ENCODE measurements at regions of chr14 and their contacts with region 1.

Region 1: DNA sequence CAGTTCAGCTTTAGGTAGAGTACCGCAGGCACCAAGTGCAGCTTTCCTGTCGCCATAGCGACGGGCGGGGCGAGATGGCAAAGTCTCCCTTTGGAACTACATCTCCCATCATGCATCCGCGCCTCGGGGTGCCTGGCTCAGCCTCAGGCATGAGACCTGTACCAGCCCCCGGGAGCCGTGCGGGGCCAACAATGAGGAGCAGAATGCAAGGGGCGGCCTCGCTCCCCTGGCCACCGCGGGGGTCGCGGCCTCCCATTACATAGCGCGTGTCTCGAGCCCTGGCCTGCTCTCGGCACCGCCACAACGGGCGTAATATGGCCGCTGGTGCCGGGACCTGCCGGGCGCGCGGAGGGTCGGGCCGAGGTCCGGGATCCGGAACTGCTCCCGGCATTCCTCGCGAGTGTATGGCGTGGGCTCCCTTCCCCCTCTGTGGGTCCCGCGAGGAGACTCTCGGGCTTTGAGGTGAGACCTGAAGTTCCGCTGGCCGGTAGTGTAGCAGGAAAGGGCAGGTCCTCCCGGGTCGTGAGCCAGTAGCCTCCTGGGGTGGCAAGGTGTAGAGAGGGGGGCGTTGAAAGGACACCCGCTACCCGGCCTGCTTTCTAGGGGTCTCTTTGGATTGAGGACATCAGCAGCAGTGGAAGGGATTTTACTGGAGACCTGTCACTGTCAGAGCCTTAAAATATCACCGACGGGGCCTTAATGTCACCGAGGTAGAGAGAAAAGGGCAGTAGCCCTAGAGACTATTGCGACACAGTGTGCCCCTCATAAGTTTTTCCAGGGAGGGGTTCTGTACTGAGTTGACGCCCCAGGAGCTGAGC is at the start of gene THTPA:
- DNase-seq: peak; percentile 59
- H3K4me3 ChIP-seq: peak within 1 kb of the TSS; percentile 90
- H3K27ac ChIP-seq: peak within 1 kb of the TSS; percentile 73
- H3K27me3 ChIP-seq: no peaks in the 10 kb centered on the region
- CTCF ChIP-seq: no peak
- polyA plus RNA-seq, gene THTPA: 4.9 and 9.3 TPM in 2 replicates

Region 2: DNA sequence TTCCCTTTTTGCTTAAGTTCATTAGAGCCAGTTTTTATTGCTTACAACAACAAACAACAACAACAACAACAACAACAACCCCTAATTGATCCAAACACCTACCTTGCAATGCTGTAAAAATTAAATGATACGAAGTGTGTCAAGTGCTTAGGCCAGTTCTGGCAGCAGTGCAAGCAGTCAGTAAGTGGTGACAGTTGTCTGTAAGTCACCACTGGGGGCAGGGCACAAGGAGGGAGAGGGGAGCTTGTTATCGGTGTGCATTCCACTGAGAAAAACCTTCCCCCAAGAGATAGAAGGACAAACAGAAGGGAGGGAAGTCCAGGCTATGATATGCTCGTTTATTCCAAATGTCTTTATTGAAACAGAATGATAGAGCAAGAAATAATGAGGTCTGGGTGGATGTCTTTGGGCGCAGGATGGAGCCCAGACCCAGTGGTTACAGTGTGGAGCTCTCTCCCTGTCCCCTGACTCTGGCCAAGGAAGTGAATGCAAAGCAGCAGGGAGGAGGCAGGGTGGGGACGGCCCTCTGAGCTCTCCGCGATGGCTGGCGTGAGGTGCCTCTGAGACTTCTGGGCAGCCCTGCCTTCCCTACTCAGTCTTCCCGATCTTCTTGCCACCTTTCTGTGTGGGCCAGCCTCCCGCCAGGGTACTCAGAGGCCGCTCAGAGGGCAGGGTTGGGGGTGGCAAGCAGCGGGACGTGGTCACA is 210.0 kb before region 1 on chr14:
- CTCF ChIA-PET with region 1: no interaction called
- POLR2A ChIA-PET with region 1: no interaction called
- DNase-seq: no peak
- H3K4me3 ChIP-seq: no peak overlapping the region
- H3K27ac ChIP-seq: no peak overlapping the region
- H3K27me3 ChIP-seq: peaks cover 3% of the 10 kb centered on the region
- CTCF ChIP-seq: no peak

Region 3: GRCh38 chr14:23478111-23478759 is 77.9 kb before region 1 on chr14:
- CTCF ChIA-PET with region 1: interaction called, 330 read pairs
- POLR2A ChIA-PET with region 1: interaction called, 5 read pairs
- DNase-seq: peak; percentile 37
- H3K4me3 ChIP-seq: no peak overlapping the region
- H3K27ac ChIP-seq: no peak overlapping the region
- H3K27me3 ChIP-seq: no peaks in the 10 kb centered on the region
- CTCF ChIP-seq: peak; percentile 78

Region 4: GRCh38 chr14:23539248-23540140 is 16.6 kb before region 1 on chr14:
- CTCF ChIA-PET with region 1: interaction called, 16 read pairs
- POLR2A ChIA-PET with region 1: interaction called, 3 read pairs
- DNase-seq: no peak
- H3K4me3 ChIP-seq: no peak overlapping the region
- H3K27ac ChIP-seq: no peak overlapping the region
- H3K27me3 ChIP-seq: peaks cover 7% of the 10 kb centered on the region
- CTCF ChIP-seq: peak; percentile 69

Region 5: GRCh38 chr14:23567192-23568020 is 11.3 kb after region 1 on chr14 and contains the start of gene AP1G2:
- CTCF ChIA-PET with region 1: interaction called, 10 read pairs
- POLR2A ChIA-PET with region 1: interaction called, 3 read pairs
- DNase-seq: no peak
- H3K4me3 ChIP-seq: peak within 1 kb of the TSS; percentile 66
- H3K27ac ChIP-seq: no peak within 1 kb of the TSS
- H3K27me3 ChIP-seq: peaks cover 22% of the 10 kb centered on the region
- CTCF ChIP-seq: no peak
- polyA plus RNA-seq, gene AP1G2: 8.2 and 10.6 TPM in 2 replicates